Mammary epithelial cell (primary cell): ENCODE measurements at regions of chr9 and their contacts with region 1.

Region 1: GRCh38 chr9:138069731-138070456 is 192.3 kb downstream of the CACNA1B start:
- DNase-seq: no peak
- H3K4me3 ChIP-seq: no peak overlapping the region
- H3K27ac ChIP-seq: no peak overlapping the region
- H3K4me1 ChIP-seq: no peaks in the 10 kb centered on the region
- H3K27me3 ChIP-seq: no peaks in the 10 kb centered on the region
- CTCF ChIP-seq: no peak

Region 2: DNA sequence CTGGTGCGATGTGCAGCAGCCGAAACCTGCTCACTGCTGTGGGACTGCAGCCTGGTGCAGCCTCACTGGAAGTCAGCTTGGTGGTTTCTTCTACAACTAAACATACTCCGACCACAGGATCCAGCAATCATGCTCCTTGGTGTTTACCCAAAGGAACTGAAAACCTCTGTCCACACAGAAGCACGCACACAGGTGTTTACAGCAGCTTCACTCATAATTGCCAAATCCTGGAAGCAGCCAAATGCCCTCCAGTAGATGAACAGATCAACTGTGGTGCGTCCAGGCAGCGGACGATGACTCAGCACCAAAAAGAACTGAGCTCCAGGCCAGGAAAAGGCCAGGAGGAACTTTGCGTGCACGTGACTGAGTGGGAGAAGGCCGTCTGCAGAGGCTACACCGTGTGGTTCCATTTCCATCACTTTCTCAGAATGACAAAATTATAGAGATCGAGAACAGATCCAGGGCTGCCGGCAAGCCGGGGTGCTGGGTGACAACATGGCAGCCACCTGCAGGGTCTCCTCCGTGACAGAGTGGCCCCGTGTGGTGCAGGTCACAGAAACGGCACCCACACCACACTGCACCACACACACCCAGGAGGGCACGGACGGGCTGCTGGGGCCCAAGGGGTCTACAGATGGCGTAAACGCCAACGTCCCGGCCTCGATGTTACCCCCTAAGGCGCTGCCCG is 587.7 kb before region 1 on chr9:
- CTCF ChIA-PET with region 1: no interaction called
- dilution Hi-C with region 1: no loop called
- in situ Hi-C with region 1: no loop called
- intact Hi-C with region 1: no loop called
- DNase-seq: peak; percentile 89
- H3K4me3 ChIP-seq: no peak overlapping the region
- H3K27ac ChIP-seq: no peak overlapping the region
- H3K4me1 ChIP-seq: peaks cover 10% of the 10 kb centered on the region
- H3K27me3 ChIP-seq: no peaks in the 10 kb centered on the region
- CTCF ChIP-seq: no peak

Region 3: DNA sequence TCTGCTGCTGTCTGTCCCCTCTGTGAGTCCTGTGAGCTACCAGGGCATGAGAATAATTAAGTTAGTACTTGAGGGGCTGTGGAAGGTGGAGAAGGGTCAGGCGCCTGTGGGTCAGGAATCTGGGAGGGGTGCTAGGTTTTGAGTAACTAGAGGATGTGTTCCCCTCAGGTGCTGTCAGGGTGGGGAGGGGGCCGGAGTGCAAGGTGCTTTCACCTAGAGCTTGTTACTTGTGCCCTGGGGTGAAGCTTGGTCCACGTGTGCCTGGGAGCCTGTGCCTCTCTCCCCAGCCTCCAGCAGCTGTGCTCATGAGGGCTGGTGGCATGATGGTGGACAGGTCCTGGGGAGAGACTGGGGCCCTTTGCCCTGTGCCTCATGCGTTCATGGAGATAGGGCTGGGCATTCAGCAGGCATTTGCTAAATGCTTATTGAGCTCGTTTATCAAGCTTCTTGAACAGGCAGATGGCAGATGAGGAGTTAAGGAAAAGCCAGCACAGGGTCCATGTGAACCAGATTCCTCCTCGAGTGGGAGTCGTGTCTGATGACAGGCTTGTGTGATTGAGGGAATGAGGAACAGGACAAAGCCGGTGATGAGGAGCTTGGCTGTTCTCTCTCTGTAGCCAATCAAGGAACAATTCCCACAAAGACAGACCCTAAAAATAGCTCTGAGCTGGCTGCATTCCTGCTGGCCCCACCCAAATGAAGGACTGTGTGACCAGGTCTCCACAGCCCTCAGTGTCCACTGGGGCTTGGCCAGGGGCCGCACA is 151.4 kb before region 1 on chr9:
- CTCF ChIA-PET with region 1: no interaction called
- dilution Hi-C with region 1: loop called (anchors 10 kb)
- in situ Hi-C with region 1: no loop called
- intact Hi-C with region 1: no loop called
- DNase-seq: no peak
- H3K4me3 ChIP-seq: no peak overlapping the region
- H3K27ac ChIP-seq: no peak overlapping the region
- H3K4me1 ChIP-seq: no peaks in the 10 kb centered on the region
- H3K27me3 ChIP-seq: no peaks in the 10 kb centered on the region
- CTCF ChIP-seq: no peak

Region 4: GRCh38 chr9:137968235-137968634 is 101.7 kb before region 1 on chr9:
- CTCF ChIA-PET with region 1: no interaction called
- dilution Hi-C with region 1: loop called (anchors 10 kb)
- in situ Hi-C with region 1: no loop called
- intact Hi-C with region 1: no loop called
- DNase-seq: no peak
- H3K4me3 ChIP-seq: no peak overlapping the region
- H3K27ac ChIP-seq: no peak overlapping the region
- H3K4me1 ChIP-seq: no peaks in the 10 kb centered on the region
- H3K27me3 ChIP-seq: no peaks in the 10 kb centered on the region
- CTCF ChIP-seq: no peak

Region 5: DNA sequence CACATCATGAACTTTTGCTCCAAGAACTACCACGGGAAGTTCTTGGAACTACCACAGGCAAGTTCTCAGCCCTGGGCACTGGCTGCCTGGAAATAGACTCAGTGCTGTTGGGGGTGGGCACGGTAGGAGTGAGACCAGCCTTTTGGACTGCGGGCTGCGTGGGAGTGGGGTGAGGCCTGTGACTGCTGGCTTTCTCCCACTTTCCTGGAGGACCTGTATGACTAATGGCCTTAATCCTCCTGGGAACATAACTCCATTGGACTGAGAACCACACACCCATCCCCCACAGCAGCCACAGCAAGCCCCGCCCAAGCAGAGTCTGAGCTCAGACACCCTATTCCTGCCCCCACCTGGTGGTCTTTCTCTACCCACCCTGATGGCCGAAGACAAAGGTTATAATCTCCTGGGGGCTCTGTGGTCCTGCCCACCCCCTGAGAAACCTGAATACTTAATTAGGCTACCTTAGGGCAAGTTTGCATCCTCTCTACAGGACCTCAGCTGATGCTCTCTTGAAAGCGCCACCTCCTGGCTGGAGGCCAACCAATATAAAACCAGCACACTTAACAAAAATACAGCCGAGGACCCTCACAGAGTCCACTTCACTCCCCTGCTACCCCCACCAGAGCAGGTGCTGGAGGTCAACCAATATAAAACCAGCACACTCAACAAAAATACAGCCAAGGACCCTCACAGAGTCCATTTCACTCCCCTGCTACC is 79.7 kb before region 1 on chr9:
- CTCF ChIA-PET with region 1: no interaction called
- dilution Hi-C with region 1: no loop called
- in situ Hi-C with region 1: no loop called
- intact Hi-C with region 1: no loop called
- DNase-seq: peak; percentile 11
- H3K4me3 ChIP-seq: no peak overlapping the region
- H3K27ac ChIP-seq: no peak overlapping the region
- H3K4me1 ChIP-seq: no peaks in the 10 kb centered on the region
- H3K27me3 ChIP-seq: no peaks in the 10 kb centered on the region
- CTCF ChIP-seq: no peak